ENCODE measurements at regions of chr9 and their contacts with region 1.

Region 1: GRCh38 chr9:122350638-122351355 is 20.0 kb upstream of the PTGS1 start:
- DNase-seq: peak; percentile 80
- H3K4me3 Mint-ChIP-seq: no peak overlapping the region
- H3K27ac Mint-ChIP-seq: no peak overlapping the region
- H3K4me1 Mint-ChIP-seq: peaks cover 8% of the 10 kb centered on the region
- H3K27me3 Mint-ChIP-seq: peaks cover 38% of the 10 kb centered on the region
- CTCF ChIP-seq: peak; percentile 81

Region 2: DNA sequence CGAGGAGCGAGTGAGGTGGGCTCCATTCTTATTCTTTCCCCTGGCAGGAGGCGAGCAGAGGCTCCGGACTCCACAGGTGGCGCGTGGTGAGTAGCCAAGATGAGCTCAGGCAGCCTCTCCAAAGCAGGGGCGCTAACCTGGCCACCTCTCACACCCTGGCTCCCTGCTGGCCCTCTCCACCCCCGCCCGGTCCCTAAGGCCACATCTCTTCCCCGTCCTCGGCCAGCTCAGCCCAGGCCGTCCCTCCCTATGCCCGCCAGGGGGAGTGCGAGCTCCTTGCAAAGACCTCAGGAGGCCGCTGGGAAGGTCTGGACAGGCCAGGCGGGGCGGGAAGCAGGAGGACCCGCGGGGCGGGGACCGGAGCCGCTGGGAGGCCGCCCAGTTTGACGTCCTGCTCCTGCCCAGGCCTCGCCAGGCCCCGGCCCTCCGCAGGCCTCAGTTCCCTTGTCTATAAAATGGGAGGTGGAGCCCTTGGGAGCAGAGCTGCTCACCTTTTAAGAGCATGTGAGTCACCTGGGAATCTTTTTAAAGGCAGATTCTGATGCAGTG is 804.8 kb before region 1 on chr9:
- CTCF ChIA-PET with region 1: no interaction called
- intact Hi-C with region 1: loop called (anchors 10 kb)
- DNase-seq: peak; percentile 92
- H3K4me3 Mint-ChIP-seq: no peak overlapping the region
- H3K27ac Mint-ChIP-seq: no peak overlapping the region
- H3K4me1 Mint-ChIP-seq: peaks cover 3% of the 10 kb centered on the region
- H3K27me3 Mint-ChIP-seq: peaks cover 15% of the 10 kb centered on the region
- CTCF ChIP-seq: peak; percentile 76

Region 3: DNA sequence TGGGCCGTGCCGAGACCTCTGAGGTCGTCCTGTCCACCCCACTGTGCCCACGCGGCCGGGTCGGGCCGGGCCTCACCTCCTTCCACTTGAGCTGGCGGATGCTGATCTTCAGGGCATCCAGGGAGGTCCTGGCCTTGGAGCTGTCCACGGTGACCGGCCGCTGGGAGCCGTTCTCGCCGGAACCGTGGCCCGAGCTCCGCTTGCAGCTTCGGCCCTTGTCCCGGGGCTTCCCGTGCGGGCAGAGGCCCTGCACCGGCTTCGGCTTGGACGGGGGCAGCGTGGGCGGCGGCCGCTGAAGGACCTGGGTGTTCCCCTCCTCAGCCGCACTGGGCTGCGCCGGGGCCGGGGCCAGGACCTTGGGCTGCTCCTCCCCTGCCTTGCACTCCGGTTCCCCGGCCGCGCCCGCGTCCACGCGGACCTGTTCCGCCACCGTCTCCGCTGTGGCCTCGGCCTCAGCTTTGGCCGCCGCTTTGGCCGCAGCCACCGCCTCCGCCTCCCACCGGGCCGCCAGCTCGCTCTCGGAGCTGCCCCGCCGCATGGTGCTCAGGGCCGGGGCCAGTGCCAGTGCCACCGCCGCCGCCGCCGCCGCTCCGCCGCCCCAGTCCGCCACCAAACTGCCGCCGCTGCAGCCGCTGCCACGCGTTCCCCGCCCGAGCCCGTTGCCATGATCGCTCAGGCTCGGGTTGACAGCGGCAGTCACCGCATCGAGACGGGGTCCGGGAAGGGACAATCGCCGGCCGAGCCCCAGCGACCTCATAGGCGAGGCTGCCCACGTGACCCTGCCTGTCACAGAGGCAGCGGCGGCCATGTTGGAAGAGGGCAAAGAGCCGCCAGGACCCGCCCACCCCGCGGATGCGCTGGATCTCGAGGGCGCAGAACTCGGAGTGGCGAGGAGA is 257.9 kb before region 1 on chr9 and contains the start of gene TTLL11:
- CTCF ChIA-PET with region 1: interaction called, 19 read pairs
- intact Hi-C with region 1: loop called (anchors 1 kb)
- DNase-seq: peak; percentile 92
- H3K4me3 Mint-ChIP-seq: peak within 1 kb of the TSS; percentile 83
- H3K27ac Mint-ChIP-seq: peak within 1 kb of the TSS; percentile 57
- H3K4me1 Mint-ChIP-seq: peaks cover 20% of the 10 kb centered on the region
- H3K27me3 Mint-ChIP-seq: peaks cover 38% of the 10 kb centered on the region
- CTCF ChIP-seq: no peak
- total RNA-seq, gene TTLL11: 10.4 and 10.5 TPM in 2 replicates

Region 4: GRCh38 chr9:122099271-122099869 is 251.4 kb before region 1 on chr9:
- CTCF ChIA-PET with region 1: interaction called, 19 read pairs
- intact Hi-C with region 1: loop called (anchors 1 kb)
- DNase-seq: peak; percentile 74
- H3K4me3 Mint-ChIP-seq: peak overlapping the region; percentile 24
- H3K27ac Mint-ChIP-seq: no peak overlapping the region
- H3K4me1 Mint-ChIP-seq: peaks cover 6% of the 10 kb centered on the region
- H3K27me3 Mint-ChIP-seq: peaks cover 34% of the 10 kb centered on the region
- CTCF ChIP-seq: peak; percentile 73

Region 5: DNA sequence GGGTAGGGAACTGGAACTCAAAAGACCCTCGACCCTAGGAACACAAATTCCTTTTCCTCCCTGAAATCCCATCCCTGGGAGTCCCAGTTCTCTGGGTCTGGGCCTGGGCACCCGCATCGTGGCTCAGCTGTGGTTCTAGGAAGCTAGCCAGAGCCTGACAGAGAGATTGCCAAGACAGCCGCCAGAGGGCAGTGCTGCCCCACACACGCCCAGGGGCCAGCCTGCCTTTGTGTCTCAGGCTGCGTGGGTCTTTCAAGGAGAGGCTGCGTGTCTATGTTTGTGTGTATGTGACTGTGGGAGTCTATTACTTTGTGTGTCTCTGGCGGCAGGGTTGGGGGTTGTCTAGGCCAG is 225.7 kb before region 1 on chr9:
- CTCF ChIA-PET with region 1: interaction called, 44 read pairs
- intact Hi-C with region 1: loop called (anchors 1 kb)
- DNase-seq: peak; percentile 78
- H3K4me3 Mint-ChIP-seq: no peak overlapping the region
- H3K27ac Mint-ChIP-seq: no peak overlapping the region
- H3K4me1 Mint-ChIP-seq: peaks cover 16% of the 10 kb centered on the region
- H3K27me3 Mint-ChIP-seq: peaks cover 40% of the 10 kb centered on the region
- CTCF ChIP-seq: peak; percentile 67

Region 6: GRCh38 chr9:122274055-122274454 is 76.7 kb before region 1 on chr9:
- CTCF ChIA-PET with region 1: no interaction called
- intact Hi-C with region 1: no loop called
- DNase-seq: no peak
- H3K4me3 Mint-ChIP-seq: no peak overlapping the region
- H3K27ac Mint-ChIP-seq: no peak overlapping the region
- H3K4me1 Mint-ChIP-seq: no peaks in the 10 kb centered on the region
- H3K27me3 Mint-ChIP-seq: no peaks in the 10 kb centered on the region
- CTCF ChIP-seq: no peak

Region 7: GRCh38 chr9:122453677-122454135 is 102.9 kb after region 1 on chr9:
- CTCF ChIA-PET with region 1: interaction called, 4 read pairs
- intact Hi-C with region 1: loop called (anchors 2 kb)
- DNase-seq: no peak
- H3K4me3 Mint-ChIP-seq: no peak overlapping the region
- H3K27ac Mint-ChIP-seq: no peak overlapping the region
- H3K4me1 Mint-ChIP-seq: no peaks in the 10 kb centered on the region
- H3K27me3 Mint-ChIP-seq: peaks cover 33% of the 10 kb centered on the region
- CTCF ChIP-seq: no peak

Region 8: DNA sequence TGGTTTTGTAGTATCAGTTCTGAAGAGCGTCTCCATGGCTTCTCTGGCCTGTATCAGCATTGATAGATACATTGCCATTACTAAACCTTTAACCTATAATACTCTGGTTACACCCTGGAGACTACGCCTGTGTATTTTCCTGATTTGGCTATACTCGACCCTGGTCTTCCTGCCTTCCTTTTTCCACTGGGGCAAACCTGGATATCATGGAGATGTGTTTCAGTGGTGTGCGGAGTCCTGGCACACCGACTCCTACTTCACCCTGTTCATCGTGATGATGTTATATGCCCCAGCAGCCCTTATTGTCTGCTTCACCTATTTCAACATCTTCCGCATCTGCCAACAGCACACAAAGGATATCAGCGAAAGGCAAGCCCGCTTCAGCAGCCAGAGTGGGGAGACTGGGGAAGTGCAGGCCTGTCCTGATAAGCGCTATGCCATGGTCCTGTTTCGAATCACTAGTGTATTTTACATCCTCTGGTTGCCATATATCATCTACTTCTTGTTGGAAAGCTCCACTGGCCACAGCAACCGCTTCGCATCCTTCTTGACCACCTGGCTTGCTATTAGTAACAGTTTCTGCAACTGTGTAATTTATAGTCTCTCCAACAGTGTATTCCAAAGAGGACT is 684.2 kb after region 1 on chr9:
- CTCF ChIA-PET with region 1: no interaction called
- intact Hi-C with region 1: no loop called
- DNase-seq: no peak
- H3K4me3 Mint-ChIP-seq: no peak overlapping the region
- H3K27ac Mint-ChIP-seq: no peak overlapping the region
- H3K4me1 Mint-ChIP-seq: no peaks in the 10 kb centered on the region
- H3K27me3 Mint-ChIP-seq: no peaks in the 10 kb centered on the region
- CTCF ChIP-seq: no peak

Measured in Calu3 (cell line).